Right ventricle myocardium inferior (tissue), 1 donor: ENCODE measurements at regions of chr16 and their contacts with region 1.

Region 1: GRCh38 chr16:25051406-25052150 is 36.4 kb upstream of the ARHGAP17 start:
- DNase-seq: no peak
- ATAC-seq: peak; percentile 51

Region 2: GRCh38 chr16:24975428-24975889 is 76.1 kb before region 1 on chr16:
- intact Hi-C with region 1: no loop called
- DNase-seq: no peak
- ATAC-seq: no peak

Region 3: DNA sequence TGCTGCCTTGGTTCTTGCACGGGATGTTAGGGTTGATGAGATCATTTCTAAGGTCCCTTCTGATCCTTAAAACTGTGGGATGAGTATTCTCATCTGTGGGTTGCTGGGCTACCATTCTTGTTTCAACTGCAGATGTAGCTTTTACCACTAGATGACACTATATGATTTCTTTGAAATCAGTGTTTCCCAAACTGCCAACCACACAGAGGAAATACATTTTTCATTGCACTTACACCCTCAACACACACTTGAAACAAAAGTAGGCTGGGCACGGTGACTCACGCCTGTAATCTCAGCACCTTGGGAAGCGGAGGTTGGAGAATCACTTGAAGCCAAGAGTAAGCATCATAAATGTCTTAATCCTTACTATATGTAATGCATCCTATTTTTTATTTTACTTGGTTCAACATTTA is 75.2 kb after region 1 on chr16:
- intact Hi-C with region 1: loop called (anchors 1 kb)
- DNase-seq: no peak
- ATAC-seq: no peak

Region 4: DNA sequence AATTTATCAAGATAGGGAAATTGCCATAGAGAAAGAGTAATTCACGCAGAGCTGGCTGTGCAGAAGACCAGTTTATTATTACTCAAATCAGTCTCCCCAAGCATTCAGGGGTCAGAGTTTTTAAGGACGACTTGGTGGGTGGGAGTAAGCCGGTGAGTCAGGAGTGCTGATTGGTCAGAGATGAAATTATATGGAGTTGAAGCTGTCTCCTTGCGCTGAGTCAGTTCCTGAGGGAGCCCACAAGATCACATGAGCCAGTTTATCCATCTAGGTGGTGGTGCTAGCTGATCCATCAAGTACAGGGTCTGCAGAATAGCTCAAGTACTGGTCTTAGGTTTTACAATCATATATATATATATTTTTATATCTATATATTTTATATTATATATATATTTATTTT is 159.2 kb after region 1 on chr16:
- intact Hi-C with region 1: loop called (anchors 5 kb)
- DNase-seq: no peak
- ATAC-seq: no peak